Esophagus muscularis mucosa (tissue), 4 donors: ENCODE measurements at regions of chr2 and their contacts with region 1.

Region 1: DNA sequence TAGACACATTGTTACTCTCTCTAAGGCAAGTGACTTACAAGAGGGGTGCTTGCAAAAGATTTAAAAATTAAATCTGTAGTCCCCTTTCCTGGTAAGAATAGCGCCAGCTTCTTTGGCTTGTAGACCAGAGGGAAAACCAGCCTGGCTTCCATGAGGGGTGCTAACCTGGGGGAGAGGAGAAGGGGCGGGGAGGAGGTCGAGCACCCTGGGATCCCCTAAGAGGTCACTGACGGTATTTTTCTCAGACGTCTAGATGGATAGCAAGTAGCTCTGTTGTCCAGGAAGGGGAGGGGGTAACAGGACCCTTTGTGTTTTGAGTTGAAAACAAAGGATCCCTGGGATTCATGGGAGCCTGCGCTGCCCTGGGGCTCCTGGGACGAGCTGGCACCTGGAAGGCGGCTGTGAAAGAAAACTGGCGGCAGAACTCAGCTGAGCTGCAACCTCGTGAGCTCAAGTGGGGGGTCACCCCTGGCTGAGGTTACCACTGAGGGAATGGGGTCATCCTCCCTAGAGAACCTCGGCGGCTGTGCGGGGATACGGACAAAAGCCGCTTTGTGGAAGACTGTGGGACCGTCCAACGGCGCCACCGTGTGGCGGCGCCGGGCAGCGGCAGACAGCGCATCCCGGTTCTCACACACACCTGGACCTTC is 37.8 kb upstream of the MRPL19 start:
- DNase-seq: peak; percentile 86
- H3K4me3 ChIP-seq: peak overlapping the region in 1 of 4 donors; percentile 16
- H3K27ac ChIP-seq: no peak overlapping the region
- H3K4me1 ChIP-seq: peaks cover 0 to 6% (median 4%) of the 10 kb centered on the region in 4 donors
- H3K27me3 ChIP-seq: peaks cover 0 to 76% (median 9%) of the 10 kb centered on the region in 4 donors
- CTCF ChIP-seq: peak; percentile 56 to 86 (median 81)
- EP300 ChIP-seq: no peak
- POLR2A ChIP-seq: no peak

Region 2: DNA sequence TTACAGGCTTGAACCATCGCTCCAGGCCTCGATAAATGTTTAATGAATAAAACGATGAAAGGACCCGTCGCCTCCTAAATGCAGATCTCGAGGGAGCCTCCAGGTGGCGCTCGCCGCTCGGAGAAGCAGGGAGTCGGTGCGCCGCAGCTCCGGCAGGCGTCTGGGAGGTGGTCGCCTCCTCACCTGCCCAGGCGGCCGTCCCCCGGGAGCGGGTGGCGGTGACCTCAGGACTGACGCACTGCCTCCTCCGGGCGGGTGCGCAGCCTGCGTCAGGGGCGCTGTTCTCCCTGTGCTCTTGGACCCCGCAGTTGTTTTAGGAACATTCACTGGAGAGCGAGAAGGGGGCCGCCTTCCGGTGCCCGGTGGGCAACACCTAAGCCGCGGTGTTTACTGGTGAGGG is 689.0 kb before region 1 on chr2:
- intact Hi-C with region 1: loop called (anchors 10 kb)
- DNase-seq: no peak
- H3K4me3 ChIP-seq: peak overlapping the region; percentile 23 to 51 (median 35)
- H3K27ac ChIP-seq: no peak overlapping the region
- H3K4me1 ChIP-seq: peaks cover 6 to 7% (median 6%) of the 10 kb centered on the region in 4 donors
- H3K27me3 ChIP-seq: peaks cover 0 to 57% (median 0%) of the 10 kb centered on the region in 4 donors
- CTCF ChIP-seq: peak; percentile 70 to 91 (median 80)
- EP300 ChIP-seq: no peak
- POLR2A ChIP-seq: no peak

Region 3: DNA sequence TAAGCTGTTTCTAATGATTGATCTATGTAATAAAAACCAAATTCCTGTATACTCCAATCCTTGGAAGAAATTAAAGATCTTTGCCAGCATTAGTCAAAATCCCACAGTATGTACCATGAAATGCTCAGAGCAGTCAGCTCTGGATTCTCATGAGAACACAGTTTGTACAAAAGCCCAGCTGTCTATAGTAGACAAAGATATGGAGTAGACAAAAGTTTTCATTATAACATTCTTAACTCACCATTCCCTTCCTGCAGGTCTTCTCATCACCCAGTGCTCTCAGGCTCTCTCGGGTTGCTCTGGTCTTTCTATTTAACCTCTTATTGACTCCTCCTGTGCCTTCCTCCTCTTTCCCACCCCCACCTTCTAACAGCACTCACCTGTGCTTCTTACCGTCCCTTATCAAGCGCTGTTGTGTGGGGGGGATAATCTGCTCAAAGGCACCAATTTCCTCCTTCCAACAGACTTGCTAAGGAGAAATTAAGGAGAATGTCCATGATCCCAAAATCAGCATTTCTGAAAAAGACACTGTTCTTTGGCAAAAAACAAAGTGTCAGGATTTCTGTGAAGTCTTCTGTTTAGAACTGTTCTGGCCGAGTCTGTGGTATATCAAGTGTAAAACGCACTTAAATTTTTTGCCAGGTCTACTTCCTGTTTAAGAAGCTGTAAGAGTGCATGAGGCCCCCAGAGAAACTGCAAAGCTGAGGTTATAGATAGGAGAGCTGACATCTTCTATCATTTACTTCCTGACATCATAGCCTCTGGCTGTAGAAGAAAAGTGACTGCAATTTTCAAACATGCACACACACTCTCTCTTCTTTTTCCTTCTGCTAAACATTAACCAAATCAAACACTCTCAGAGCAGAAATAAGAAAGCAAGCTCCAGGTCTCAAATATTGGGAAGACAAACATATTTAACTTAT is 192.1 kb before region 1 on chr2:
- intact Hi-C with region 1: no loop called
- DNase-seq: no peak
- H3K4me3 ChIP-seq: no peak overlapping the region
- H3K27ac ChIP-seq: no peak overlapping the region
- H3K4me1 ChIP-seq: no peaks in the 10 kb centered on the region
- H3K27me3 ChIP-seq: peaks cover 0 to 5% (median 0%) of the 10 kb centered on the region in 4 donors
- CTCF ChIP-seq: no peak
- EP300 ChIP-seq: no peak
- POLR2A ChIP-seq: no peak

Region 4: DNA sequence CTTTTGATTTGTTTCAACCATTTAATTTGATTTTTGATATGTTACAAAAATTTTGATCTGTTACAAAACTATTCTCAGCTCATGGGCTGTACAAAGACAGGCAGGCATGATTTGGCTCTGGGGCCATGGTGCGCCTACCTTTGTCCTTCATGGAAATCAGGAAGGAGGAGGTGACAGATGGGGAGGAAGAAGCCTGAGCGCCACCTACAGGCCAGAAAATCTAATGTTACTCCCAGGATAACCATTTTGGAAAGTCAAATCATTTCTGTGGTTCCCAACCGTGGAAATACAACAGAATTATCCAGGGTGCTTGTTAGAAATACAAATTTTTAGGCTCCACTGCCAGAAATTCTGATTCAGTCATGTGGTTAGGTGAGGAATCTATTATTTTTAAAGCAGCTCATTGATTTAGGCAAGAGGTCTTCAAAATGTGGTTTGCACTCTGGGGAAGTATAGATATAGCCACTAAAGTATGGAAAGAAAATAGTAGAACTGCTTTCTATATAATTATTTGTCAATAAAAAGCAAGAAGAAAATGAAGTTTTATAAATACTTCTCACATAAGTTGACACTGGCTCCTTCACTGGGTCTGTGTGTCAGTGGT is 142.0 kb before region 1 on chr2:
- intact Hi-C with region 1: loop called (anchors 10 kb)
- DNase-seq: no peak
- H3K4me3 ChIP-seq: no peak overlapping the region
- H3K27ac ChIP-seq: no peak overlapping the region
- H3K4me1 ChIP-seq: no peaks in the 10 kb centered on the region
- H3K27me3 ChIP-seq: peaks cover 0 to 11% (median 0%) of the 10 kb centered on the region in 4 donors
- CTCF ChIP-seq: peak in 1 of 3 experiments; percentile 8
- EP300 ChIP-seq: no peak
- POLR2A ChIP-seq: no peak